PC-9 (cell line): ENCODE measurements at regions of chr6 and their contacts with region 1.

Region 1: DNA sequence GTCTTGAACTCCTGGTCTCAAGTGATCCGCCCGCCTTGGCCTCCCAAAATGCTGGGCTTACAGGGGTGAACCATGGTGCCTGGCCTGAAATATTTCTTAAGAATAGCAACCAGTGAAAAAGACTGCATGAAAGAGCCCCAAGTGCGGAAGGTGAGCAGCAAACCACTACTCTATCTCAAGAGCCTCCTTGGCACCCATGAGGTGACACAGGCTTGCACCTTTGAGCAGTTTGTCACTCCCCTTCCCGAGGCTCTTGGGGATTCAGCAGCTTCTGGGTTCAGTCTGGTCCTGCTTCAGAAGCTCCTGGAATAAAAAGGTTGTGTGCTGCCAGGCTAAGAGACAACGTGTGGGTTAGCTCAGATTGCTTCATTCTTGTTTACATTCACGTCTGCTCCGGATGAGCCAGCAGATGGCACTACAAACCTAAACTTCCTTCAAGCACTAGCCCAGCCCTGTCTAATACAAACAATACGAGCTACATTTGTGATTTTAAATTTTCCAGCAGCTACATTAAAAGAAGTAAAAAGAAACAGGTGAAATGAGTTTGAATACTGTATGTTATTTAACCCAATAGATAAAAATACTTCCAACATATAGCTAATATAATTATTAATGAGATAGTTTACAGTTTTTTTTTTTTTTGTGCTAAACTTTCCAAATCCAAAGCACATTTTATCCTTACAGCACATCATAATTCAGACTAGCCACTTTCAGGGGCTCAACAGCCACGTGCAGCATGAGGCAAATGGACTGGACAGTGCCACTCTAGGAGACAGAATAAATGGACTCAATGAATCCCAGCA is 46.2 kb downstream of the GJA10 start:
- DNase-seq: peak; percentile 47 to 54
- H3K4me3 ChIP-seq: no peak overlapping the region
- H3K27ac ChIP-seq: no peak overlapping the region
- H3K4me1 ChIP-seq: no peaks in the 10 kb centered on the region
- H3K27me3 ChIP-seq: no peaks in the 10 kb centered on the region
- CTCF ChIP-seq: peak; percentile 76

Region 2: GRCh38 chr6:89623749-89624148 is 316.7 kb before region 1 on chr6:
- CTCF ChIA-PET with region 1: no interaction called
- POLR2A ChIA-PET with region 1: no interaction called
- intact Hi-C with region 1: no loop called
- DNase-seq: no peak
- H3K4me3 ChIP-seq: no peak overlapping the region
- H3K27ac ChIP-seq: no peak overlapping the region
- H3K4me1 ChIP-seq: no peaks in the 10 kb centered on the region
- H3K27me3 ChIP-seq: no peaks in the 10 kb centered on the region
- CTCF ChIP-seq: no peak

Region 3: DNA sequence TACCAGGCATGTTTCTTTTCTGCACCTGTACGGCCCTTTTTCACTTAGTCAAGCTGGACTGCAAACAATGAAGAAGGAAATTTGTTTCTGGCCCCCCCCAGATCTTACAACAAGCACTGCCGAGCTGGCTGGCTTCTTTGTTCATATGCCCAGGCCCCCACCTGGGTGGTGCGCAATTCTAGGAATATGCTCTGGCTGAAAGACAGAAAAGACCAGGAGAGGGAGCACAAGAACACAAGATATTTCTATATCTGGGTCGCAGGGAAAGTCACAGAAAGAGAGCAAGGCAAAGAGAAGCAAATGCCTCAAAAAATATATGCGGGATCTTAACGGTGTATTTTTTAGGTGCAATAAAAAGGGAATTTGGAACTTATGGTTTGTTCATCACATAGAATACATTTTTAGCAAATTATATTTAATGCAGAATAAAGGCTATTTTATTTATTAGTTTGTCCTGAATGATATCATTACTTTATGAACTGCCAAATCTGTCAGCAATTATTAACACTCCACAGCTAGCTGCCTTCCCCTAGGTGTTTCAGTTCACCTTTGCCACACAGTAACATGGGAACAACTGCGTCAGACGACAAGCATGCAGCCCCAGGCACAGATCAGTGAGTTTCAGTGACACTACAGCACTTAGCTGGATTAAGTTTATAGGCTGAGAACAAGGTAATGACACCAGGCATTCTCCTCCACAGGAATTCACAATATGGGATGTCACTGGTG is 30.3 kb after region 1 on chr6:
- CTCF ChIA-PET with region 1: no interaction called
- POLR2A ChIA-PET with region 1: no interaction called
- intact Hi-C with region 1: loop called (anchors 1 kb)
- DNase-seq: peak; percentile 36 to 61
- H3K4me3 ChIP-seq: no peak overlapping the region
- H3K27ac ChIP-seq: peak overlapping the region; percentile 56
- H3K4me1 ChIP-seq: peaks cover 5% of the 10 kb centered on the region; the same call in 1 of the 2 replicates
- H3K27me3 ChIP-seq: no peaks in the 10 kb centered on the region
- CTCF ChIP-seq: peak; percentile 69

Region 4: DNA sequence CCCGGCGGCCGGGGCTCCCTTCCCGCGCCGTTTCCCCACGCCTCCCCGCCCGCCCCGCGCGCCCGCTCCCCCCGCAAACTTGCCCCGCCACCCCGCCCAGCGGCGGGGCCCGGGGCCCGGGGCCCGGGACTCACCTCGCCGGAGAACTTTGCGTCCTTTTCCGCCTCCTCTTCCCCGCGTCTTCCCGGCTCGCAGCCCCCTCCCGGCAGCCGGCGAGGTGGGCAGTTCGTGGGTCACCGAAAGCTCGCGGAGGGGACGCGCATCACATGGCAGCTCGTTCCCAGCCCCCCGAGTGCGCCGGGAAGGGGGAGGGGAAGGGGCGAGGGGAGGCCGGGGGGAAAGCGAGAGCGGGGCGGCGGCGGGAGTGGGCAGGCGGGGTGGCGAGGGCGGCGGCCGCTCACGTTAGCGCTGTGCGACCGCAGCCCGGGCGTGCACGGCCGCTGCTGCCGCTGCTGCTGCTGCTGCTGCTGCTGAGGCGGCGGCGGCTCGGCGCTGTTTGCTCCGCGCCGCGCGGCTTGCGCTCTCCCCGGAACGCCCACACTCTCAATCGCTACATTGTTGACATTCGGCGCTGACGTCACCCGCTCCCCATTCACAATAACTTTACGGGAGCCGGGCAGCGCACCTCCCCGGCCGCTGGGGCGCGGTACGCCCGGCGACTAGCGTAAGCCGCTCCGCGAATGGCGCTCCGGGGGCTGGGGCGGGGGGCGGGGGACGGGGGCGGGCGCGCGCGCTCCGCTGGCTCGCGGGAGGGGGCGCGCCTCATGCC is 356.1 kb after region 1 on chr6 and contains the start of gene BACH2:
- CTCF ChIA-PET with region 1: no interaction called
- POLR2A ChIA-PET with region 1: no interaction called
- intact Hi-C with region 1: loop called (anchors 2 kb)
- DNase-seq: peak; percentile 57 to 78
- H3K4me3 ChIP-seq: peak within 1 kb of the TSS; percentile 57
- H3K27ac ChIP-seq: no peak within 1 kb of the TSS
- H3K4me1 ChIP-seq: peaks cover 9% of the 10 kb centered on the region; the same call in 1 of the 2 replicates
- H3K27me3 ChIP-seq: 0 out of 2 replicates have a peak, but pooled peaks cover 5% of the 10 kb centered on the region
- CTCF ChIP-seq: no peak
- total RNA-seq, gene BACH2: 2.3 and 4.2 TPM in 2 replicates

Region 5: GRCh38 chr6:90369024-90369519 is 428.6 kb after region 1 on chr6:
- CTCF ChIA-PET with region 1: interaction called, 12 read pairs
- POLR2A ChIA-PET with region 1: no interaction called
- intact Hi-C with region 1: no loop called
- DNase-seq: peak; percentile 72 to 97
- H3K4me3 ChIP-seq: no peak overlapping the region
- H3K27ac ChIP-seq: peak overlapping the region; percentile 78
- H3K4me1 ChIP-seq: peaks cover 21% of the 10 kb centered on the region
- H3K27me3 ChIP-seq: no peaks in the 10 kb centered on the region
- CTCF ChIP-seq: no peak

Region 6: DNA sequence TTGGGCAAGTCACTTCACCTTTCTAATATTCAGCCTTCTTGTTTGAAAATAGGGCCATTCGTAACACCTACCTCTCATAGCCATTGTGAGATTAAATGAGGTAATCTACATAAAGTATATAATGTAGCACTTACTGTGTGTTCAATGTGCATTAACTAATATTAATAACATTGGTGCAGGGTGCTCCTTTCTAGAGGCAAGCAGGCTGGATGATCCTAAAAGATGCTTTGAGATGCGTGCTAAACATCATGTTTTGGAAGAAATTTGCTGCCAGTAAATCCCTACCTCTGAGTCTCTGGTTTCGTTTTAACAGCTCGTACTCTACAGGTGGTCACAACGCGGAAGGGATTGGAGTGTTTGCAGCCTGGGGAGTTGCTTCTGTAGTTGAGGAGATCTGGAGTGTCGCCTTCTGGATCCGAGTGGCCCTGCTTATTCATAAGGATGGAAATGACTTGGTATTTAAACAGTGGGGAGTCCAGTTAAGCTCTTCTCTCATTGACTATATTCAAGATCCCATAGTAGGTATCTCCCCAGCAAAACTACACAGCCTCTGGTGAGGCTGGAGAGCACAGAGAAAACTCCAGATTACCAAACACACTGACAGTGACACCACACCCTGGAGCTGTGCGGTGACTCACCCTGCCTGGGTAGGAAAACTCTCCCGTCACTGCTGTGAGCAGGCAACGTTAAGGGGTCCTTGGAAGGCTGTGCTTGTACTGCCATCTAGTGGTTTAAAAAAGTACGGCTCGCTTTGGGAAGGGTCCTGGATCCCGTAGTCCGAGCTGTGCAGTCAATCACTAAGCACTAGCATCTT is 538.6 kb after region 1 on chr6:
- CTCF ChIA-PET with region 1: interaction called, 37 read pairs
- POLR2A ChIA-PET with region 1: no interaction called
- intact Hi-C with region 1: loop called (anchors 1 kb)
- DNase-seq: peak; percentile 81 to 82
- H3K4me3 ChIP-seq: no peak overlapping the region
- H3K27ac ChIP-seq: no peak overlapping the region
- H3K4me1 ChIP-seq: no peaks in the 10 kb centered on the region
- H3K27me3 ChIP-seq: no peaks in the 10 kb centered on the region
- CTCF ChIP-seq: peak; percentile 81